Dendritic cell treated with granulocyte-macrophage colony-stimulating factor and Interleukin-4, amounts not matched to agents 40 ng/mL and 50 ng/mL, for 4 days (primary cell): ENCODE measurements at regions of chr11 and their contacts with region 1.

Region 1: GRCh38 chr11:65180877-65181568 is 705 bp upstream of the CAPN1 start:
- H3K4me3 Mint-ChIP-seq: peak overlapping the region; percentile 82
- H3K27ac Mint-ChIP-seq: peak overlapping the region; percentile 91
- H3K4me1 Mint-ChIP-seq: peaks cover 28% of the 10 kb centered on the region
- H3K27me3 Mint-ChIP-seq: no peaks in the 10 kb centered on the region

Region 2: DNA sequence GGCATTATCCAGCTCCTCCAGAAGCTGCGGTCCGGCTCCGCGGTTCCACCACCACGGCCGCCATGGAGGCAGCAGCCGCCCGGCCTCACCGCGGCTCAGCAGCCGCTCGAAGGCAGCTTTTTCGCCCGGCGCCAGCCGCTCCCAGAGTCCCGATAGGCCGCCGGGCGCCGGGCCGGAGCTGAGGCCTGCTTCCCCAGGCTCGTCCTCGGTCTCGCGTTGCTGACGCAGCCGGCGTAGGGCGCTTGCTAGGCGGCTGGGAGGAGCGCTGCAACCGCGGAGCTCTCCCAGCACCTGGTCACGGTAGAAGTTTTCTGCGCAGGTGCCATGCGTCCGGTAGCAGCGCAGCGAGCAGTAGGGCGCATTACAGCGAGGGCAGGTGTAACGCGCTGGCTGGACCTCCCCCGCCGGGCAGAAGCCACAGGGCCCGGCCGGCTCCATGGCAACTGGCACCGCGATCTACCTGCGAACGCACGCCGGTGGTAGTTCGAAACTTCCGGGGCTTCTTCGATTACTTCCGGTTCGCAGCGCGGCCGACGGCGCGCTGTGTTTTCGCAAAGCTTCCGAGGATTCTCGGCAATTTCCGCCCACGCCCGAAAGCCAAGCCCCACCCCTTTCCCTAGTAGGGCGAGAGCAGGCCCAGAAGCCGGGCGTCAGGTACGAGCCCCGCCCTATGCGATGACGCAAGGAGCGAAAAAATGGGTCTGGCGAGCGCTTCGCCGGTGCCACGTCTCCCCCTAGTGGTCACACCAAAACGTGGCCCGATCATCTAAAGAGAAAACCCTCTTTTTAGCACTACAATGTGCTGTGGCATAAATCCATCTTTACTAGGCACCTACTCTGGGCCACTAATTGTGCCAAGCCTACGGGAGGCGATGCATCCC is 63.6 kb before region 1 on chr11 and contains the start of gene ZNHIT2:
- intact Hi-C with region 1: no loop called
- H3K4me3 Mint-ChIP-seq: peak within 1 kb of the TSS; percentile 84
- H3K27ac Mint-ChIP-seq: peak within 1 kb of the TSS; percentile 99
- H3K4me1 Mint-ChIP-seq: peaks cover 60% of the 10 kb centered on the region
- H3K27me3 Mint-ChIP-seq: peaks cover 21% of the 10 kb centered on the region

Region 3: GRCh38 chr11:65134386-65135253 is 46.4 kb before region 1 on chr11 and contains the start of gene SYVN1:
- intact Hi-C with region 1: loop called (anchors 1 kb)
- H3K4me3 Mint-ChIP-seq: peak within 1 kb of the TSS; percentile 89
- H3K27ac Mint-ChIP-seq: peak within 1 kb of the TSS; percentile 99
- H3K4me1 Mint-ChIP-seq: peaks cover 32% of the 10 kb centered on the region
- H3K27me3 Mint-ChIP-seq: no peaks in the 10 kb centered on the region

Region 4: DNA sequence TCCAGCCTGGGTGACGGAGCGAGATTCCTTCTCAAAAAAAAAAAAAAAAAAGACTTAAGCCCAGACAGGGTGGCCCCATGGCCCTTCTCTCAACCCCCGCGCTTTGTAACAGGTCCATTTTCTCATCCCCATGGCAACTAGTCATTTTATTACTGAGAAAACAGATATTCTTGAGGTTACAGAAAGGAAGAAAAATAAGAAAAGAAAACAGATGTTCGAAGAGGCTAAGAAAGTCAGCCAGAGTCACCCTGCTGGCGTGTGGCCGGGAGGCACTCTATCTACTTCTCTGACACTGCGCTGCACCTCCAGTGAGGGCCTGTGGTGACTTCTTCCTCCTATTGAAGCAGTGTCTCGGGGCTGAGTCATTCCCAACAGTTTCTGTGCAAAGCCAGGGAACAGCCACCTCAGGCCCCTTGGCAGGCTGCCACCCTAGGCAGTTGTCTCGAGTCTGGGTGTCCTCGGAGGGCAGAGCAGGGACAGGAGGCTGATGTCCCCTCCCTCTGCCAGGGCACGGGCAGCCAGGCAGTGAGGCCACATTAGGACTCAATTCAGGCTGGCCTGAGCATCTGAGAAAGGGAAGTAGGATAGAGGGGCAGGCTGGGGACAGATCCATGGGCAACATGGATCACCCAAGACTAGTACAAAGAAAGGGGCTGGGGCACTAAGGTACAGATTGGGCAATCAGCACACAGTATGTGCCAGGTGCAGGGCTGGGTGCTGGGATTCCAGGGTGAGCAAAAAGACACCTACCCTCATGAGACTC is 30.3 kb before region 1 on chr11:
- intact Hi-C with region 1: loop called (anchors 2 kb)
- H3K4me3 Mint-ChIP-seq: peak overlapping the region; percentile 60
- H3K27ac Mint-ChIP-seq: peak overlapping the region; percentile 93
- H3K4me1 Mint-ChIP-seq: peaks cover 40% of the 10 kb centered on the region
- H3K27me3 Mint-ChIP-seq: no peaks in the 10 kb centered on the region

Region 5: DNA sequence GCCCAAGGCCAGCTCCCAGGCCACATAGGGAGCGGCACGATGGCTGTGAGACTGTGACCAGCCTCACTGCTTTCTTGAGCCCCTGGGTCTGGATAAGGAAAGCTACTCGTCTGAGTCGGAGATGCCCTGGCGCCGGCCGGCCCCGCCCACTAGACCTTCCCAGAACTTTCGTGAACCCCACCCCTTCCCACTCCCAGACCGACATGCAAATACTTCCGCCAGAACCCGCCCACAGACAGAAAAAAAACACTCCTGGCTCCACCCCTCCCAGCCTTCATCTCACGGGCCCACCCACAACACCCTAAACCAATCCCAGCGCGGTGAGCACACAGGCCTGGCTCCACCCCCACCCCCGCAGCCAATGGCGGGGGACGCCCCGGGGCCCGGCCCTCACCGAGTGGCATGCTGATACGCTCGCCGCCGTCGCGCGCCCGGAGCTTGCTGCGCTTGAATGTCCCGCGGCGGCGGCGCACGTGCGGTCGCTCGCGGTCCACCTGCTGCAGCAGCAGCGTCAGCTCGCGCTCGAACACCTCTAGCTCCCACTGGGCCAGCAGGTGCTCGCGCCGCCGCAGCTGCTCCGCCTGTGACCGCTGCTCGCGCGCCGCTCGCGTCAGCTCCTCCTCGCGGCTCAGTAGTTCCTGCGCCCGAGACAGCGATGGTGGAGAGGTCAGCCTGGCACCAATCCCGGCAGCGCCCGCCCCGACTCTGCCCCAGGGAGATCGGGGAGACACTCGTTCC is 426.0 kb after region 1 on chr11:
- intact Hi-C with region 1: no loop called
- H3K4me3 Mint-ChIP-seq: peak overlapping the region; percentile 4
- H3K27ac Mint-ChIP-seq: no peak overlapping the region
- H3K4me1 Mint-ChIP-seq: peaks cover 64% of the 10 kb centered on the region
- H3K27me3 Mint-ChIP-seq: no peaks in the 10 kb centered on the region